Posterior vena cava (tissue), 2 donors: ENCODE measurements at regions of chr15 and their contacts with region 1.

Region 1: GRCh38 chr15:74768771-74769342 is 13.0 kb upstream of the CSK start:
- DNase-seq: peak; percentile 89

Region 2: DNA sequence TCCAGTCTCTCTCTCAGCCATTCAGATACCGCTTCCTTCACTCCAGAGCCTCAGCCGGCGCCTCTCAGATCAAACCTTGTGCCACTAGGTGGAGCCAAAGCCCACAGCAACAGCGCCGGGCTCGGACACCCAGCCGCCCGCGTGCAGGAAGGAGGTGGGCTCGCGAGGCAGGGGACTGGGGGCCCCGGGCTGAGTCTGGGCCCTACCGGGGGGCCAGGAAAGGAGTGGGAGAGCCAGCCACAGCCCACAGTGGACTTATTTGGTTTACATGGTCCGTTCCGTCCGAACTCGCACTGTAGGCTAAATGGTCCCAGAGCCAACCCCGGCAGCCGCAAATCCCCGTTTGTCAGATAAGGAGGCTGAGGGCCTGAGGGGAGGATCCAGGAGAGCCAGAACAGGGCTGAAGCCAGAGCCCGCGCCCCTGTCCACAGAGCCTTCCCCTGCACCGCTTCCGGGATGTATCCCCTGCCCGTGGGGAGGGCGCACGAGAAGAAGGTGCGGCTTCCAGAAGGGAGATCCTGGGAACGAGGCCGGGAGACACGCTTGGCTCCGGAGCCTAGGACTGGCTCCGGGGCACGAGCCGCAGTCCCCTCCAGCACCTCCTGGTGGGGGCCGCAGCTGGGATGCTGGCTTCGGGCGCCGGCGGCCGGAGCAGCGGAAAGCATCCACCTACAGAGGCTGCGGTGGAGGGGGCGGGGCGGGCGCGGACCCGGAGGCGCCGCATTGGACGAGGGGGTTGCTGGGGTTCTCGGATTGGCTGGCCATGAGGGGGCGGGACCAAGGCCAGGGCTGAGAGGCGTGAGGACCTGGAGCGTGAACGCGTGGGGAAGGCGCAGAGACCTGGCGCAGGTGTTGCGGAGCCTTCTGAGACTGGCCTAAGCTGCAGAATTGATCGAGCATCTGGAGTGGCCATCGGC is 394.9 kb before region 1 on chr15:
- intact Hi-C with region 1: loop called (anchors 5 to 10 kb)
- DNase-seq: peak; percentile 97

Region 3: GRCh38 chr15:74799856-74800547 is 31.1 kb after region 1 on chr15:
- intact Hi-C with region 1: loop called in 1 of 2 experiments (anchors 2 kb)
- DNase-seq: peak; percentile 95

Region 4: DNA sequence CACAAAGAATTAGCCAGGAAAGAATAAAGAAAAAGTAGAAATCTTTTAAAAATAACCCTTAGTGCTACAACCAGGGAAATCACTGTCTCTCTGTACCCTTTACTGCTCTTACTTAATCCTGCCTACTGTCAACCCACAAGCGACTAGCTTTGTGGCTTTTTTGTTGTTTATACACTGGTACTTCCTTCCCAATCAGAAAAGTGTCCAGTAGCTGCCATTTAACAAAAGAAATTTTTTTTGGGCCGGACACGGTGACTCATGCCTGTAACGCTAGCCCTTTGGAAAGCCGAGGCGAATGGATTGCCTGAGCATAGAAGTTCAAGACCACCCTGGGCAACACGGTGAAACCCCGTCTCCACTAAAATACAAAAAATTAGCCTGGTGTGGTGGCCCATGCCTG is 151.6 kb after region 1 on chr15:
- intact Hi-C with region 1: no loop called
- DNase-seq: peak; percentile 32

Region 5: GRCh38 chr15:74948795-74949194 is 179.9 kb after region 1 on chr15:
- intact Hi-C with region 1: loop called (anchors 5 to 10 kb)
- DNase-seq: no peak